ENCODE measurements at regions of chr9 and their contacts with region 1.

Region 1: GRCh38 chr9:93134015-93134739 is at the start of gene NINJ1:
- DNase-seq: peak; percentile 62
- ATAC-seq: peak; percentile 87
- H3K4me3 Mint-ChIP-seq: peak within 1 kb of the TSS; percentile 79
- H3K27ac Mint-ChIP-seq: no peak within 1 kb of the TSS
- H3K4me1 Mint-ChIP-seq: peaks cover 30% of the 10 kb centered on the region
- H3K27me3 Mint-ChIP-seq: peaks cover 20% of the 10 kb centered on the region
- CTCF ChIP-seq: no peak
- total RNA-seq, gene NINJ1: 35.6 to 41.3 TPM (median 37.7 TPM) in 3 replicates

Region 2: DNA sequence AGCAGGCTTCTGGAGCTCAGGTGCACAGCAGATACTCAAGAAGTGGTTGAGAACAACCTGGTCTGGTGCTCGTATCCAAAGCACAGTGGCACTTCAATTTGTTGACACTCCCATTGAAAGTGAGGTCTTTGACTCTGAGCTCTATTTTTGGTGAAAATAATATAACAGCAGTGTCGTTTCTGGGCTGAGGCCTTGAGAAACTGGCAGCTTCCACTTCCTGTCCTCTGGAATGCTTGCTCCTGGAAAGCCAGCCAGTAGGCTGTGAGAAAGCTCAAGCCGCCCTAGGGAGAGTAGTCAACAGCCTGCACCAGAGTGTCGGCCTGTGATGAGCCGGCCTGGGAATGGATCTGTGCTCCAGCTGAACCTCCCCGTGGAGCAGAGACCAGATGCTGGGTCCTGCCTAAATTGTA is 82.5 kb before region 1 on chr9:
- CTCF ChIA-PET with region 1: no interaction called
- POLR2A ChIA-PET with region 1: no interaction called
- DNase-seq: no peak
- ATAC-seq: no peak
- H3K4me3 Mint-ChIP-seq: no peak overlapping the region
- H3K27ac Mint-ChIP-seq: no peak overlapping the region
- H3K4me1 Mint-ChIP-seq: peaks cover 17% of the 10 kb centered on the region
- H3K27me3 Mint-ChIP-seq: peaks cover 11% of the 10 kb centered on the region
- CTCF ChIP-seq: no peak

Region 3: DNA sequence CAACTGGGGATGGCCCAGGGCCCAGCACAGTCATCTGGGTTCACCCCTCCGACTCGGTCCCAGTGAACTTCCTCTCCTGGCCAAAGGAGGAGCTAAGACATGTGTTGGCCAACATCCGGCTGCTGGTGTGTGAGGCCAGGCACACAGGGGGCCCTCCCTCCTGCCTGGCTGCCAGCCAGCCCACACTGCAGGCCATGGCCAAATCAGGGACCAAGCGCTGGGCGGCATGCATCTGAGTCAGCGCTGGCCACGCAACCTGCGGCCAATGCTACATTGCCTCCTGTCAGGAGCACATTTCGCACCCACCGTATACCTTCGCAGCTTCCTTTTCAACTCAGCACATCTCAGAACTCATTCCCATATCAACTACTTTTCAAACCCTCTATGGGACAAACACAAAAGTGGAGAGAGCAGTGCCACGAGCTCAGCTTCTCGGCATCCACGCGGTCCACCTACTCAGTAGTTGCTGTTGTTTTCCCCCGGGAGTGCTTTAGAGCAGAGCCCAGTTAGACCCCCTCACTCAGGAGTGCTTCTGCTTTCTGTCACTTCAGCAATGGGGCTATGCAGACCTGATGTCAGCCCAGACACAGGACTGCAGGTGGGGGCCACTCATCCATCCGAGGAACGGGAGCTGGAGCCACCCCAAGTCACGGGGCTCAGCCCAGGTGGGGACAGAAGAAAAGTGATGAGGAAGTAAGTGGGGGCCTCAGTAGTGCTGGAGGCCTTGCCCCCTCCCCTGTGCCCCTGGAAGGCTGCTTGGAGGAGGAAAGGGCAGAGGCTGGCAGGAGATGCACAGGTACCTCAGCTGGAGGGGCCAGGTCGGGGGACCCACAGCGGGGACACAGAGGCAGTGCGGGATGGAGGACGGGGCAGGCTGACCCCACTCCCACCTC is 14.0 kb before region 1 on chr9:
- CTCF ChIA-PET with region 1: interaction called, 10 read pairs
- POLR2A ChIA-PET with region 1: interaction called, 5 read pairs
- DNase-seq: peak; percentile 42
- ATAC-seq: peak; percentile 79
- H3K4me3 Mint-ChIP-seq: no peak overlapping the region
- H3K27ac Mint-ChIP-seq: peak overlapping the region; percentile 89; the same call in 1 of the 2 replicates
- H3K4me1 Mint-ChIP-seq: peaks cover 13% of the 10 kb centered on the region
- H3K27me3 Mint-ChIP-seq: no peaks in the 10 kb centered on the region
- CTCF ChIP-seq: no peak

Region 4: DNA sequence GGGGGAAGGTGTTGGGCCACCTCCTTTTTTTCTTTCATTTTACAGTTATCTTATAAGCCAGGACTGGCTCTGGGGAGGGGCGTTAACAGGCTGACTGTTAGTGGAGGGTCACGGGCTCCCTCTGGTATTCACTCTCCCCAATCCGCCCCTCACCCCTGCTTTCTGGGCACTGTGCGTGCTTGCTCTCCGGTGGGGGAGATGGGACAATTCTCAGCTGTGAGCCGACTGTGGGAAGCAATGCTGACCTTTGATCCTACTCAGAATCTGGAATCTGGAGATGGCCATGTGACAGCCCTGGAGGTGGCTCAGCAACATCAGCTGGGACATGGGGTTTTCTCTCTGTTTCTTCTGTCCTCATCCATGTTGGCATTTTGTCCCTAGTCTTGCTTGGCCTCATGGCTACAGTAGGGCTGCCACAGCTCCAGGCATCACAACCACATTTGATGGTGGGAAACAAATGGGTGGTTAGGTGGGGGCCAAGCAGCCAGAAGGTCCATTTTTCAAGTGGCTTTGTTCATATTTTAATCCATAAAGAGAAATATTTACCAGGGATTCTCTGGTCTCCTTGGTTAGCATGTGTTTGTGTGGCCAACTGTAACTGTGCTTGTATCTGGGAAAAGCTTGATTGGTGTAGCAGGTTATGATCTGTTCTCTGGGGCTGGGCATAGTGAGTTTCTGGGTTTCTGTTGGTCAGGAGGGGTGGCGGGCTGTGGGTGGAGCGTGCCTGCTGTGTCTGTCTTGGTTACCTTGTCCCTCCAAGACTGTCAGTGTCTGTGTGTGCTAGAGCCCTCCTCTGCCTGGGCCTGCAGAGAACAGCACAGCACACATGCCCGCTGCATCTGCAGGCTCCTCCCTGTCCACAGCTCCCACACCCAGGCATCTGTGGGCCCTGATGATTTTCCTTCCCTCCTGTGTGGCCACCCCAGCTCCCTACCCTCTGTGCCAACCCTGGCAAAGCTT is 62.2 kb after region 1 on chr9:
- CTCF ChIA-PET with region 1: no interaction called
- POLR2A ChIA-PET with region 1: no interaction called
- DNase-seq: no peak
- ATAC-seq: no peak
- H3K4me3 Mint-ChIP-seq: no peak overlapping the region
- H3K27ac Mint-ChIP-seq: peak overlapping the region; percentile 71; the same call in 1 of the 2 replicates
- H3K4me1 Mint-ChIP-seq: peaks cover 42% of the 10 kb centered on the region
- H3K27me3 Mint-ChIP-seq: no peaks in the 10 kb centered on the region
- CTCF ChIP-seq: no peak